Tibial artery (tissue), 4 donors: ENCODE measurements at regions of chr12 and their contacts with region 1.

Region 1: DNA sequence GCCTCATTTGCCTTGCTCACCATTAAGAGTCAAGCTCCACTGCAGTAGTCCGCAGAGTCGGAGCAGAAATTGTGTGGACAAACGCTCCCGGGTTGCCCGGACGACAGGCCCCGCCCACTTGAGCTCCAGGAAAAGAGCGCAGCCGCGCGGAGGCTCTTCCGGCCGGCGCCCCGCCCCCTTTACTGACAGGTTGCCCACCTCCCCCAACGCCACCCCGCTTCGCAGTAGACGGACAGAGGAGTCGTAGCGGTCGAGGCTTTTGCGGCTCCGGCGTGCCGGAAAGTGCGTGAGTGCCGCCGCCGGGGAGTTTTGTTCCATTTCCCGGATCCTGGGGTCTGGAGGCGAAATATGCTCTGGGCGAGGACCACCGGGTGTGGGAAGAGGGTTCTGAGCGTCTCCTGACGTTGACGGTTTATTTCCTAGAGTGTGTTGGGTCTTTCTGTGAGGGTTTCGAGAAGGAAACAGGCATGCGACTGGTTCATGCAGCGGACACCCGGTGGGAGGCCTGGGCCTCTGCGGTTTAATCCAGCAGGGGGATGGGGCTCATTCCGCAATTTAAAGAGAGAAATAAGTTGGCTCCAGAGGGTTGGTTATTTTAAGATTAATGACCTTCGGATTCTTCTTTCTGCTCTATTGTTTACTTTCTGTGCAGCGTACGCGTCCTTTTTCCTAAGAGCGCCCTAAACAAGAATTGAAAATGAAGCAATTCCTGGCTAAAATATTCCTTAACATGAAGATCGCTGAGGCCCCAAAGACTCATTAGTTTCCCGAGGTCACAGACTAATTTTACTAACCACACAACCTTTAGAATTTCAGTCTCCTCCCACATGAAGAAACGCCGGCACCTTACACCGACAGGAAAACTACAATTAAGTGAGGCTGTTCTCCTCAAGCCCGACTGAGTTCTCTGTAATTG is at the starts of genes DNAI7 and ETFRF1:
- DNase-seq: peak; percentile 98
- H3K4me3 ChIP-seq: peak within 1 kb of the TSS; percentile 73 to 91
- H3K27ac ChIP-seq: peak within 1 kb of the TSS; percentile 95
- H3K4me1 ChIP-seq: peaks cover 0 to 21% (median 10%) of the 10 kb centered on the region in 4 donors
- H3K27me3 ChIP-seq: no peaks in the 10 kb centered on the region
- CTCF ChIP-seq: peak; percentile 6 to 23

Region 2: DNA sequence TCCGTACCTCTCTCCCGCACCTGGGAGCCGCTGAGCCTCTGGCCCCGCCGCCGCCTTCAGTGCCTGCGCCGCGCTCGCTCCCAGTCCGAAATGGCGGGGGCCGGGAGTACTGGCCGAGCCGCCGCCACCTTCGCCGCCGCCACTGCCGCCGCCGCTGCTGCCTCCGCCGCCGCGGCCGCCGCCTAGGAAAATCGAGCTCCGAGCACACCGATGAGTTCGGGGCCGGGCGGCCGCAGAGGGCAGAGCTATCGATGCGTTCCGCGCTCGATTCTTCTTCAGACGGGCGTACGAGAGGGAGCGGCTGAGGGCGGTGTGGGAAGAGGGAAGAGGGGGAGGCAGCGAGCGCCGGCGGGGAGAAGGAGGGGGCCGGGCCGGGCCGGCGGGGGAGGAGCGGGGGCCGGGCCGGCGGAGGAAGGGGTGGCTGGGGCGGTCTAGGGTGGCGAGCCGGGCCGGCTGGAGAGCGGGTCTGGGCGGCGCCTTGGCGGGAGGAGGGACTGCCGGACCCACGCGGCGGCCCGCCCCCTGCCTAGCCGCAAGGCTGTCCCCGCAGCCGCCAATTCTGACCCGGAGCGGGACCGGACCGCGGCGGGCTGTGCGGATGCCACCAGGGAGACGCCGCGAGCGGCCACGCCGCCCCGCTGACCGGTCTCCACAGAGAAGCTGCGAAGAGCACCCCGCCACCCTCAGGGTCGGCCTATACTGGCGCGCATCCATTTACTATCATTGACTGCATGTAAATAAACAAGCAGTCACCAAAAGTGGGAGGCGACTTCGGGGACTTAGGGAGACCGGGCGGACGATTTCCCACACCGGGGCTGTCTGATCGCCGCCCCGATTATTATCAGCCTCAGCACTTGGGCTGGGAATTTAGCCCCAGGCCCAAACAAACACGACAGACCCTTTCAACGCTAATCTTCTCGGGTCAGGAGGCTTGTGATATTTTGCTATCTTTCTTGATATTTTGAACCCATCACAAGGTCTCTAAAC is 55.7 kb after region 1 on chr12 and contains the start of gene KRAS:
- intact Hi-C with region 1: loop called (anchors 5 kb)
- DNase-seq: peak; percentile 97 to 98
- H3K4me3 ChIP-seq: peak within 1 kb of the TSS; percentile 97 to 99
- H3K27ac ChIP-seq: peak within 1 kb of the TSS; percentile 97 to 98
- H3K4me1 ChIP-seq: peaks cover 0 to 15% (median 11%) of the 10 kb centered on the region in 4 donors
- H3K27me3 ChIP-seq: no peaks in the 10 kb centered on the region
- CTCF ChIP-seq: no peak